Right lobe of liver (tissue), 6 donors: ENCODE measurements at regions of chr11 and their contacts with region 1.

Region 1: DNA sequence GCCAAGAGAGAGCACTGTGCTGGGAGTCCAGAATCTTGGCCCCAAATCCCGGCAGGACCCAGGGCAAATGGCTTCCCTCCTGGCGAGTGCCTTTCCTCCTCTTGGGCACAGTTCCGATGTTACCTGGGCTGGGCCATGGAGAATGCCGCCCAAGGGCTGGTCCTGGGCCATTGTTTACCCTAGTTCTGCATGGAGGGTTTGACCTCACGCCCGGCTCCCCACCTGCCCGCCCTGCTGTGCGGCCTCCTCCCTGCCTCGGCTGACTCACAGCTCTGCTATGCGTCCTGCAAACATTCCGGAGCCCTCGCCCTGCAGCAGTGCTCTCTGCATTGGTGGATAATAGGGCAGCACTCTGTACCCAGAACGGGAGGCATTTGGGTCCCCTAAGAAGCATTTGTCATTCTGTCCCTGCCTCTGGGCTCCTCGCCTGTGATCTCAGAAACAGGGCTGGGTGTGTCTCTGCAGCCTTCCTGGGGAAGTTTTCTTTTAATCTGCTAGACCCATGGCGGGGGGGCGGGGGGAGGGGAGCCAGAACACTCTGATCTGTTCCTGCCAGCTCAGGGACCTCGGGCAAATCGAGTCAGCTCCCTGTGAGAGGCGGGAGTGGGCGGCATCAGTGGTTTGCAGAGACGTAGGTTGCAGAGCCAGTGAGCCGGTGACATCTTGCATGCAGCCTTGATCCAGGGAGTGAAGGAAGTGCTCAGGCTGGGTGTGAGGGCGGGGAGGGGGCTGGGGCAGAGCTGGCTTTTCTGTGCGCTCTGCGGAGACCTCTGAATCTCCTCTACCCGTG is 32.9 kb upstream of the SMIM38 start:
- DNase-seq: peak in 2 of 3 donors; percentile 63 to 91
- ATAC-seq: peak; percentile 81 to 98 (median 86)
- H3K4me3 ChIP-seq: no peak overlapping the region
- H3K27ac ChIP-seq: no peak overlapping the region
- H3K4me1 ChIP-seq: peaks cover 0 to 9% (median 3%) of the 10 kb centered on the region in 4 donors
- H3K27me3 ChIP-seq: no peaks in the 10 kb centered on the region
- CTCF ChIP-seq: no peak
- POLR2A ChIP-seq: no peak

Region 2: GRCh38 chr11:69427337-69427736 is 304.5 kb after region 1 on chr11:
- intact Hi-C with region 1: loop called in 1 of 2 experiments (anchors 10 kb)
- DNase-seq: peak; percentile 81 to 93 (median 90)
- ATAC-seq: peak; percentile 82 to 90 (median 86)
- H3K4me3 ChIP-seq: no peak overlapping the region
- H3K27ac ChIP-seq: peak overlapping the region in 1 of 3 donors; percentile 70
- H3K4me1 ChIP-seq: peaks cover 0 to 48% (median 23%) of the 10 kb centered on the region in 4 donors
- H3K27me3 ChIP-seq: no peaks in the 10 kb centered on the region
- CTCF ChIP-seq: no peak
- POLR2A ChIP-seq: peak; percentile 57